H1 (cell line): ENCODE measurements at regions of chr5 and their contacts with region 1.

Region 1: GRCh38 chr5:38551030-38552017 is 5.1 kb downstream of the LIFR start:
- DNase-seq: no peak
- H3K4me3 ChIP-seq: no peak overlapping the region
- H3K27ac ChIP-seq: no peak overlapping the region
- H3K4me1 ChIP-seq: peaks cover 0 to 5% (median 0%) of the 10 kb centered on the region in 4 experiments; a peak in 2 of 7 replicates
- H3K27me3 ChIP-seq: no peaks in the 10 kb centered on the region
- CTCF ChIP-seq: peak in 2 of 3 experiments; percentile 67; a peak in 3 of 4 replicates
- EP300 ChIP-seq: no peak
- POLR2A ChIP-seq: no peak
- RAD21 ChIP-seq: peak; percentile 69 to 70

Region 2: GRCh38 chr5:38540314-38540713 is 11.0 kb before region 1 on chr5:
- CTCF ChIA-PET with region 1: interaction called, 11 read pairs
- POLR2A ChIA-PET with region 1: no interaction called
- DNase-seq: no peak
- H3K4me3 ChIP-seq: no peak overlapping the region
- H3K27ac ChIP-seq: no peak overlapping the region
- H3K4me1 ChIP-seq: peaks cover 0 to 5% (median 1%) of the 10 kb centered on the region in 4 experiments; a peak in 1 of 7 replicates
- H3K27me3 ChIP-seq: no peaks in the 10 kb centered on the region
- CTCF ChIP-seq: no peak
- EP300 ChIP-seq: no peak
- POLR2A ChIP-seq: no peak
- RAD21 ChIP-seq: no peak

Region 3: DNA sequence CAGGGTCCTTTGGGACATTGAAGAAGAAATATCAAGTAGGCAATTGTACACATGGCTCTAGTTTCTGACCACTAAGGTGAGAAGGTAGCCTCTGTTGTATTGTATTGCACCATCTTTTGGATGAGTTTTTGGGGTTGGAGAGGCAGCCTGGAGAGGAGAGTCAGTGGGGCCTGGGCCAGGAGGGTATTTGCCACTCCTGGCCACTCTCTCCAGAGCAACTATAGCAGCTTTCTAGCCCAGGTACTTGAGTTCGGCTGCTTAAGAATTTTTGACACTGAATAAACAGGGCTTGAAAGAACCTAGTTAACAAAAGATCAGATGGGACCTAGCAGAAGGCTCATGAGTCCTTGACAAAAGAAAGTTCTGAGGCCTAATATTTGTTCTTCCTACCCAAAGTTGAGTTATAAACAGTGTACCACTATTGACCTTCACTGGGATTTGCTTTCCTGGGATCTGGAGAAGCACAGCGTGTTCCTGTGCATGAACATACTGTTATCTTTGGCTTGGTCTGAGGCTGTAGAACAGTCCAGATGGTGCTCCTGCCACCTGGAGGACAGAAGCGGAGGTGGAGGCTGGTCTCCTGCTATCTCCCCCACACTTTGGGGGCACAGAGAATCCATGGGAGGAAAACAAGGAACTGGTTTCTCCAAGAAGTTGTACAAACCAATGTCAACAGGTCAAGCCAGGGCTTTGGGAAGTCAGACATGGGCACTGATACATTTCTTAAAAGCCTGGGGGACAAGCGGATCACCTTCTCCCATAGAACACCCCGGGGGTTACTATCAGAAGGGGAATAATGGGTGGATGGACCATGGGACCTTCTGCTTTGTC is 115.6 kb after region 1 on chr5:
- CTCF ChIA-PET with region 1: interaction called, 12 read pairs
- POLR2A ChIA-PET with region 1: no interaction called
- DNase-seq: peak in 1 of 2 experiments; percentile 48
- H3K4me3 ChIP-seq: no peak overlapping the region
- H3K27ac ChIP-seq: no peak overlapping the region
- H3K4me1 ChIP-seq: no peaks in the 10 kb centered on the region
- H3K27me3 ChIP-seq: no peaks in the 10 kb centered on the region
- CTCF ChIP-seq: peak; percentile 67 to 72 (median 67)
- EP300 ChIP-seq: no peak
- POLR2A ChIP-seq: no peak
- RAD21 ChIP-seq: peak; percentile 71 to 82